ENCODE measurements at regions of chr4 and their contacts with region 1.

Region 1: DNA sequence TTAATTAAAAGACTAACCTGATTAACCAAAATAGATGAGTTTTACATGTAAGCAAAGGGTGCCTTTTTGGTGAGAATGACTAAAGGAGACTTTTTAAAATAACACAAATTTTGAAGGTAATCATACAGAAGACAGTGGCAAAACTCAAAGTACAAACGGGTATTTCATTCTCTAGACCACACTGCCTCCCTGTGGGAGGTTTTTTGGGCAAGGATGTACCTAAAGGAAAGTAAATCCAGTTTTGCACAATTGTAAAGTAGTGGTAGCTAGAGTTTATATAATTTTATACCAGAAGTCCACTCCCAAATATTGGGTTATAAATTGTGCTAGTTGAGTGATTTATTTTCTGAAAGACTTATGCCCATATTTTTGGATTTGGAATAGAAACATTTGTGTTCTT is 201.0 kb downstream of the PAPSS1 start:
- DNase-seq: no peak
- ATAC-seq: peak in 1 of 4 donors; percentile 60
- H3K4me3 ChIP-seq: no peak overlapping the region
- H3K27ac ChIP-seq: no peak overlapping the region
- H3K4me1 ChIP-seq: no peaks in the 10 kb centered on the region
- H3K27me3 ChIP-seq: no peaks in the 10 kb centered on the region
- CTCF ChIP-seq: peak; percentile 41

Region 2: GRCh38 chr4:107037199-107037584 is 481.9 kb before region 1 on chr4:
- intact Hi-C with region 1: loop called in 1 of 2 experiments (anchors 10 kb)
- DNase-seq: peak; percentile 48 to 67
- ATAC-seq: peak in 3 of 4 donors; percentile 60 to 68 (median 67)
- H3K4me3 ChIP-seq: peak overlapping the region; percentile 58
- H3K27ac ChIP-seq: no peak overlapping the region
- H3K4me1 ChIP-seq: peaks cover 6% of the 10 kb centered on the region
- H3K27me3 ChIP-seq: peaks cover 0 to 33% (median 0%) of the 10 kb centered on the region in 3 donors
- CTCF ChIP-seq: peak; percentile 49

Region 3: DNA sequence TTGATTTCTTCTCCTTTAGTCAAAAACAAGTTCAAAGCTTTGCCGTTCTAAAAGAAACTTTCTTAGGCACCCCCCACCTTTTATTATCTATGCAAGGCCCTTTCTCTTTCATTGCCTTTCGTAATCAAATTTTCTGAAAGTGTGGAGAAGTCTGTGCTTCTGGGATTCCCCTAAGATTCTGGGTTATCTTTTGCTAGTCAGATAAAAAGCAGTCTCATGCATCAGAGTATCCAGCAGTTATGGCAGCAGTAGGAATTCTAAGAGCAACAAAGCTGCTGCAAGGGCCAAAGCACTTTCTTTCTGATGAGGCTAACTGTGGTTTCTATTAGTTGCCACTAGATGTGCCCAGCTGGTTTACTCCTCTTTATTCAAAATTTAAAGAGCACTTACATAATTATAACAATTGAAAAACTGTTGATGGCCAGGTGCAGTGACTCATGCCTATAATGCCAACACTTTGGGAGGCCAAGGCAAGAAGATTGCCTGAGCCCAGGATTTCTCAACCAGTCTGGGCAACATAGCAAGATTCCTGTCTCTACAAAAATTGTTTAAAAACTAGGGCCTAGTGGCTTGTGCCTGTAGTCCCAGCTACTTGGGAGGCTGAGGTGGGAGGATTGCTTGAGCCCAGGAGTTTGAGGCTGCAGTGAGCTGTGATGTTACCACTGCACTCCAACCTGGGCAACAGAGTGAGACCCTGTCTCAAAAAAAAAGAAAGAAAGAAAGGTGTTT is 95.2 kb before region 1 on chr4:
- intact Hi-C with region 1: no loop called
- DNase-seq: no peak
- ATAC-seq: no peak
- H3K4me3 ChIP-seq: no peak overlapping the region
- H3K27ac ChIP-seq: no peak overlapping the region
- H3K4me1 ChIP-seq: no peaks in the 10 kb centered on the region
- H3K27me3 ChIP-seq: no peaks in the 10 kb centered on the region
- CTCF ChIP-seq: no peak

Measured in psoas muscle (tissue), 8 donors.